ENCODE measurements at regions of chr12 and their contacts with region 1.

Region 1: DNA sequence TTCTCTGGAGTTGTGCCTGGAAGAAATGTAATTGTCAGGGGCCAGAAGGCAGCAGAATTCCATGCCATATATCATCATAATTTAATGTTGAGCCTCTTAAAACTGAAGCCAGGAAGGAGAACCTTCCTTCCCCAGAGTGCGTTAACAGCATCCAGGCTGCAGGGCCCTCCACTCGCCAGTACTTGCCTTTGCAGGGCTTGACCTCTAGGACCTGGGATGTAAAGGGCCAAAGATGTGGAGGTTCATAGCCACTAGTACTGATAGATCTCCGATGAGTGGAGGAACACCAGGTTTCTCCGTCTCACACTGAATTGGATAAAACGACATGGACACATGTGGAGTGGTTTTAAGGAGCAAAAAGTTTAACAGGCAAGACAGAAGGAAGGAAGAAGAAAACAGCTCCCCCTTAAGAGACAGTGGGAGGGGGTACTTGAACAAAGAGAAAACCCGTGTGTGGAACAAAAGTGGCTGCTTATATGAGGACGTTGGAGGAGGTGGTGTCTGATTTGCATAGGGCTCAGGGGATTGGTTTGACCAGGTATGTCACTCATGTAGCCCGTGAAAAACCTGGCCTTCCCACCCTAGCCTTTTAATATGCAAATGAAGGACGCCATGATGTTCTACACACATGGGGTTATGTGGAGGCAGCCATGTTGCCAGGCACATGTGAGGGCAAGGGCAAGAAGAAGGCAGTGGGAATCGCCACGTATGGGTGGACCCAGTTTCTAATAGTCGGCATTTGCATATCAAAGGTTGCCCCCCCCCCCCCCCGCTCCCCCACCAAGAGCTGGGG is 38.8 kb upstream of the WSCD2 start:
- DNase-seq: no peak
- ATAC-seq: no peak
- H3K4me3 ChIP-seq: no peak overlapping the region
- H3K4me3 Mint-ChIP-seq: no peak overlapping the region
- H3K27ac ChIP-seq: no peak overlapping the region
- H3K27ac Mint-ChIP-seq: no peak overlapping the region
- H3K4me1 ChIP-seq: no peaks in the 10 kb centered on the region
- H3K4me1 Mint-ChIP-seq: no peaks in the 10 kb centered on the region
- H3K27me3 ChIP-seq: peaks cover 0 to 6% (median 2%) of the 10 kb centered on the region in 4 experiments
- H3K27me3 Mint-ChIP-seq: peaks cover 45% of the 10 kb centered on the region
- CTCF ChIP-seq: no peak

Region 2: GRCh38 chr12:107580750-107581618 is 509.3 kb before region 1 on chr12:
- CTCF ChIA-PET with region 1: no interaction called
- POLR2A ChIA-PET with region 1: no interaction called
- intact Hi-C with region 1: no loop called
- DNase-seq: no peak
- ATAC-seq: no peak
- H3K4me3 ChIP-seq: no peak overlapping the region
- H3K4me3 Mint-ChIP-seq: no peak overlapping the region
- H3K27ac ChIP-seq: no peak overlapping the region
- H3K27ac Mint-ChIP-seq: no peak overlapping the region
- H3K4me1 ChIP-seq: no peaks in the 10 kb centered on the region
- H3K4me1 Mint-ChIP-seq: no peaks in the 10 kb centered on the region
- H3K27me3 ChIP-seq: no peaks in the 10 kb centered on the region
- H3K27me3 Mint-ChIP-seq: peaks cover 4% of the 10 kb centered on the region
- CTCF ChIP-seq: no peak

Region 3: DNA sequence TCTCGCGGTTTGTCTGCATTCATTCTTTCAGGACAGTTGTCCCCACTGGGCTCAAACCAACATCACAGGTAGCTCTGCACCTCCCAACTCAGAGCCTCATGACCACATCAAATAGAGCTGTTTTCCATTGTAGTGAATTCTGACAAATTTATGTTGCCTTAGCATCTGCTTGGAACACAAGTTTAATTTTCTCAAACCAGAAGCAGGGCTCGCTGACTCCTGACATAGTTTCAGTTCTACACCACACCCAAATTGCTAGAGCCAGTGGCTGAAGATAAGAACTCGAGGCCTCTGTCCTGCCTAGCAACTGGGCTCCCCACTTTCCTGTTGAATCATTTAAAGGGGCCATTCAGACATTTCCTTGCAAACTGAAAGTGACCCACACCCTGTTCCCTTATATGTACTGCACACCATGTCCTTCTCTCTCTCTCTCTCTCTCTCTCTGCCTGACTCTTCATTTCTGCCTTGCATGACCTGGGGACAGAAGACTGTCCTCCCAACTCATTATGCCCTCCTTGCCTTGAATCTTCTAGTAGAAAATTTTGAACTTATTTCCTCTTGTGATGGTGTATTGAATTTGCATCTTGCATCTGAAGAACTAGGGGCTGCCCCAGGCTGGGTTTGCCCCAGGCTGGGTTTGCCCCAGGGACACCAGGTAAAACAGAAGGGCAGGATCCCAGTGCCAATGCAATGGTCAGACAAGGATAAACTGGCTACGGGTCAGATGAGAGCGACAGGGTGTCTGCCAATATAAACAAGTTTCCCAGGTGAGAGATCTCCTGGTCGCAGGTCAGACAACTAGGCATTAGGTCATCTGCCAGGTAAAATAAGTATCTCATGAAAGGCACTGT is 29.0 kb after region 1 on chr12:
- CTCF ChIA-PET with region 1: no interaction called
- POLR2A ChIA-PET with region 1: no interaction called
- intact Hi-C with region 1: loop called (anchors 1 kb)
- DNase-seq: peak; percentile 69
- ATAC-seq: peak; percentile 70
- H3K4me3 ChIP-seq: peak overlapping the region in 1 of 5 experiments; percentile 12
- H3K4me3 Mint-ChIP-seq: peak overlapping the region; percentile 66
- H3K27ac ChIP-seq: peak overlapping the region; percentile 68 to 74
- H3K27ac Mint-ChIP-seq: peak overlapping the region; percentile 89
- H3K4me1 ChIP-seq: peaks cover 22 to 62% of the 10 kb centered on the region in 2 donors
- H3K4me1 Mint-ChIP-seq: peaks cover 55% of the 10 kb centered on the region
- H3K27me3 ChIP-seq: peaks cover 0 to 4% (median 0%) of the 10 kb centered on the region in 4 experiments
- H3K27me3 Mint-ChIP-seq: peaks cover 6% of the 10 kb centered on the region
- CTCF ChIP-seq: no peak